ENCODE measurements at regions of chr7 and their contacts with region 1.

Region 1: GRCh38 chr7:107051376-107051775 is 6.9 kb downstream of the PRKAR2B start:
- DNase-seq: no peak
- ATAC-seq: no peak
- H3K4me3 ChIP-seq: no peak overlapping the region
- H3K27ac ChIP-seq: no peak overlapping the region
- H3K4me1 ChIP-seq: no peaks in the 10 kb centered on the region
- H3K27me3 ChIP-seq: peaks cover 0 to 19% (median 0%) of the 10 kb centered on the region in 3 donors
- CTCF ChIP-seq: no peak

Region 2: DNA sequence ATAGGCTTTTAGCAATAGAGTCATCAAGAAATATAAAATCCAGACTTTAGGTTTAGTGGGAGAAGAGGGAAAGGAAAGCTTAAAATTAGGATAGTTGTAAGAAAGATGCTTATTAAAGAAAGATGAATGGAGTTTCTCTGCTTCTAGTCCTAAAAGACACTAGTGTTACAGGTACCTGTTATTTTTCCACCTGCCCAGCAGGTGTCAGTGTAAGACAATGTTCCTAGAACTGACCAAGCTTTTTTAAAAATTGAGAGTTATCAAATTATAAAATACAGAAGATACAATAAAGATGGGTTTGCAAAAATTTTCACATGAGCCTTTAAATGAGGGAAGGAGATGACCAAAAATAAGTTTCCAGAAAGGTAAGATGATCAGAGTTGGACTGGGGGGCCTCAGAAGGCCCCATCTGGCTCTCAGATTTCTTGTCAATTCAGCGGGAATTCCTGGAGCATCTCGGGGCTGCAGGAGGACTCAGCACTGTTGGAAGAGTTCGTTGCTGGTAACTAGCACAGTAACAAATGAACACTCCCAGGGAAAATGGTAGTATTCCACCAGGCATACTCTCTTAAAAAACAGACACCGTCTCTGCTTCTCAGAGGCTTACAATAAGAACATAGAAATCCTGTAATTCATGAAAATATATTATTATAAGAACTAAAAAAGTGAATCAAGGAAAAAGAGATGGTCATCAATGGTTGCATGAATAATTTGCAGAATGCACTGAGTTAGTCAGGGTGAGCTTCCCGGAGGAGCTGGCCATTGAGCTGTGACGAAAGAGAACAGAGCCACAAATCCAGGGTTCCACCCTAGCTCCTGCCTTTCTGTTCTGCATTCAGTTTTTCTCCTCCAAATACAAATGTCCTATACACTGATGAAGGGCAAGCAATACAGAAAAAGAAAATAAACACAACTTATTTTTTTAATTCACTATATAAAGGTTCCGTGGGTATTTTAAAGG is 258.1 kb before region 1 on chr7:
- intact Hi-C with region 1: loop called in 1 of 2 experiments (anchors 10 kb)
- DNase-seq: no peak
- ATAC-seq: peak in 1 of 4 donors; percentile 59
- H3K4me3 ChIP-seq: no peak overlapping the region
- H3K27ac ChIP-seq: no peak overlapping the region
- H3K4me1 ChIP-seq: no peaks in the 10 kb centered on the region
- H3K27me3 ChIP-seq: no peaks in the 10 kb centered on the region
- CTCF ChIP-seq: peak; percentile 61